ENCODE measurements at regions of chr1 and their contacts with region 1.

Region 1: GRCh38 chr1:160726498-160727315 is 12.3 kb upstream of the SLAMF7 start:
- DNase-seq: peak; percentile 83
- ATAC-seq: peak; percentile 75
- H3K4me3 Mint-ChIP-seq: no peak overlapping the region
- H3K27ac Mint-ChIP-seq: no peak overlapping the region
- H3K4me1 Mint-ChIP-seq: peaks cover 24% of the 10 kb centered on the region
- H3K27me3 Mint-ChIP-seq: no peaks in the 10 kb centered on the region

Region 2: GRCh38 chr1:160519642-160520435 is 206.9 kb before region 1 on chr1:
- CTCF ChIA-PET with region 1: no interaction called
- DNase-seq: peak; percentile 69
- ATAC-seq: peak; percentile 73
- H3K4me3 Mint-ChIP-seq: peak overlapping the region; percentile 88
- H3K27ac Mint-ChIP-seq: peak overlapping the region; percentile 96
- H3K4me1 Mint-ChIP-seq: peaks cover 82% of the 10 kb centered on the region
- H3K27me3 Mint-ChIP-seq: no peaks in the 10 kb centered on the region

Region 3: GRCh38 chr1:160681067-160681890 is 45.4 kb before region 1 on chr1:
- CTCF ChIA-PET with region 1: interaction called, 139 read pairs
- DNase-seq: peak; percentile 93
- ATAC-seq: peak; percentile 72
- H3K4me3 Mint-ChIP-seq: no peak overlapping the region
- H3K27ac Mint-ChIP-seq: peak overlapping the region; percentile 92
- H3K4me1 Mint-ChIP-seq: peaks cover 83% of the 10 kb centered on the region
- H3K27me3 Mint-ChIP-seq: no peaks in the 10 kb centered on the region

Region 4: DNA sequence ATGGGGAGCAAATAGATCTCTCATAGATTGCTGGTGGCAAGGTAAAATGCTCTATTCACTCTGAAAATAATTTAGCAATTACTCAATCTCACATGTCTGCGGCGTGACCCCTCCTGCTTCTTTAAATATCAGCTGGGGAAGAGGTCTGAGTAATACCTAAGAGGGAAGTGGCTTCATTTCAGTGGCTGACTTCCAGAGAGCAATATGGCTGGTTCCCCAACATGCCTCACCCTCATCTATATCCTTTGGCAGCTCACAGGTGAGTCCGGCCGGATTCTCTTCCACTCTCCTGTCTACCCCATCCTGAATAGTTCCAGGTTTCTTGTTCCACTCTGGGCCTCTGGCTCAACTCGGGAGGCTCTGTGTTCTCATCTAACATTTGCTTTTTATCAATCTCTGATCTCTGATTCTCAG is 12.4 kb after region 1 on chr1 and contains the start of gene SLAMF7:
- CTCF ChIA-PET with region 1: interaction called, 70 read pairs
- DNase-seq: peak; percentile 81
- ATAC-seq: peak; percentile 69
- H3K4me3 Mint-ChIP-seq: peak within 1 kb of the TSS; percentile 82
- H3K27ac Mint-ChIP-seq: peak within 1 kb of the TSS; percentile 86
- H3K4me1 Mint-ChIP-seq: peaks cover 67% of the 10 kb centered on the region
- H3K27me3 Mint-ChIP-seq: no peaks in the 10 kb centered on the region
- total RNA-seq, gene SLAMF7: 107 to 126 TPM

Region 5: DNA sequence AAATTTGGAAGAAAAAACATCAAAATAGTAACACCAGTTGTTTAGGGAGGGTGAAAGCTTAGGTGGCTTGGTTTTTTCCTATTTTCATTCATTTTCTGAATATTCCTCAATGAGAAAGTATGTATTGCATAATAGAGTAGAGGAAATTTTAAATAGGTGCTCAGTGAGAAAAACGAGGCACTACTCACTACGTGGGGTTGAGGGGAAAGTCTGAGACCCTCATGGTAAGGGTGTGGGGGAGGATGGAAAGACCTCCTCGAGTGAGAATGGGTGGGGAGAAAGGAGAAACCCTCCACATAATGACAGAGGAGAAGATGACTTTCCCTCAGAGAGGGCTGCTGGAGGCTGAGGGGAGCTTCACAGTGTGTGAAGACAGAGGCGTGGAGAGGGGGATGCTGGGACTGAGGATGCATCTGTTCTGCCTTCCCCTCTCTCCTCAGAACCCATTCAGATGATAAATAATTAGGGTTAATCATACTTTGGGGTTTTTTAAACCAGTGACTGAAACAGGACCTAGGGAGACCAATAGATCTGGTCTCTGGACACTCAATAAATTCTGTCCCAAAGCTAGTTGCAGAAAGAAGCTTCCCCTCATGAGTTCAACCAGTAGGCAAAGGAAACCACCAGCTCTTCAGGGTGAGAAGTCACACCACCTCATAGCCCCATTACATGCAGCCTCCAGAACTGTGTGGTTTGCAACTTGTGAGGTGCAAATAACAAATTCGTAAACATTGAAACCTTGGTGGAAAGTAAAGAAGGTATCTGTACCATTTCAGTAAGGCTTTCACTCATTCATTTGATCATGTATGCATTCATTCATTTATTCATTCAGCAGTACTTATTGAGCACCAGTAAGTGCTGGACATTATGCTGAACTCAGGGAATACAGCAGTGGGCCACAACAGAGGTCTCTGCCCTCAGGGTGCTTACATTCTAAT is 29.5 kb after region 1 on chr1:
- CTCF ChIA-PET with region 1: interaction called, 292 read pairs
- DNase-seq: peak; percentile 84
- ATAC-seq: peak; percentile 83
- H3K4me3 Mint-ChIP-seq: peak overlapping the region; percentile 25
- H3K27ac Mint-ChIP-seq: peak overlapping the region; percentile 94
- H3K4me1 Mint-ChIP-seq: peaks cover 61% of the 10 kb centered on the region
- H3K27me3 Mint-ChIP-seq: no peaks in the 10 kb centered on the region

Region 6: DNA sequence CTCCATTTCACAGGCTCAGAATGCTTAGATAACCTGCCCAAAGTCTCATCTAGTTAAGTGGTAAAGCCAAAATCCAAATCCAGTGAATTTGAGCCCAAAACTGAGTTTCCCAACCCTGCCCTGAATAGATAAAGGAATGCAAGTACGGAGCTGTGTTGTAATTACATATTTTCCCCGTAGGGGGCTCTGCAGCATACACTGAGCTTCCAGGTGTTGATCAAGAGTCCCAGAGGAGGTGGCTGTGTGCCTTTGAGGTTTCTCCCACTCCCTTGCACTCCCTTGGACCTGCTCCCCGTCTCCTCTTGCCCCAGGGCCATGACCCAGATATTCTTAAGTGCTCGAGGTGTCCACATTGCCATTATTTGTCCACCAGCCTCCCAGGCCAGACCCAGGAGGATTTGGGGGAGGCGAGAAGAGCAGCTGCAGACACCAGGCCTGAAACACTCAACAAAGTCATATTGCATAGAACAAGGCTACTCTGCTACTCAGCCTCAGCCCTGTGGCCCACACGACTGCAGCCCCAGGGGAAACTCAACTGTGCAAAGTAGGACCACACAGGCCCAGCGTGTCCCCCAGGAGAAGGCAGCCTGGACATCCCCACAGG is 50.9 kb after region 1 on chr1:
- CTCF ChIA-PET with region 1: interaction called, 84 read pairs
- DNase-seq: peak; percentile 66
- ATAC-seq: peak; percentile 52
- H3K4me3 Mint-ChIP-seq: no peak overlapping the region
- H3K27ac Mint-ChIP-seq: peak overlapping the region; percentile 22
- H3K4me1 Mint-ChIP-seq: peaks cover 28% of the 10 kb centered on the region
- H3K27me3 Mint-ChIP-seq: no peaks in the 10 kb centered on the region

Measured in activated CD8-positive, alpha-beta memory T cell treated with anti-CD3 and anti-CD28 coated beads, Interleukin-2, amount 10 ng/mL, durations not matched to agents 7 days and 5 days (primary cell).